H1 (cell line): ENCODE measurements at regions of chr3 and their contacts with region 1.

Region 1: DNA sequence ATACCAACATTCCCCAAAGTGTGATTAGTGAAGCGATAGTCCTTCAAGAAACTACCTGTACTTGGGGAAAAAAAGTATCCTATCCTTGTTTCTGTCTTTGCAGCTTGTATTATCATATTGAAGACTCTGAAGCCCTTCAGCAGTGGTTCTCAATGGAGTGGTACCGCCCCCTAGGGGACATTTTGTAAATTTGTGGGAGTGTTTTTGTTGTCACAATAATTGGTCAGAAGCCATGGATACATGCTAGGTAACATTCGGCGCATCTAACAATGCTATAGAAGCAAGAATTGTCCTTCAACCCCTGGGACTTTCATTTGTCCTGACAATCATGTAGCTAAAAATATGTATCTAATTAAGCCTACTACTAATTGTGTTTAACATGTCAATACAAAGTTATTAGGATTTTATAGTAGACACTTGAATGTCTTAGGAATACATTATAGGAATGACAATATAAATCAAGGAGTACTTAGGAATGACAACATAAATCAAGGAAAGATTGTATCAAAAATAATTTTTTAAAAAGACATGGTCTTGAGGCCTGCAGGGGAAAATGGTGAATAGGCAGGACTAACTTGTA is 53.7 kb downstream of the NMD3 start:
- DNase-seq: peak; percentile 13 to 57
- H3K4me3 ChIP-seq: no peak overlapping the region
- H3K27ac ChIP-seq: no peak overlapping the region
- H3K4me1 ChIP-seq: no peaks in the 10 kb centered on the region; a peak in 1 of 7 replicates
- H3K27me3 ChIP-seq: no peaks in the 10 kb centered on the region
- CTCF ChIP-seq: peak in 2 of 3 experiments; percentile 57 to 58; a peak in 2 of 4 replicates
- EP300 ChIP-seq: no peak
- POLR2A ChIP-seq: no peak
- RAD21 ChIP-seq: peak; percentile 59 to 68

Region 2: GRCh38 chr3:161284989-161285388 is 10.2 kb after region 1 on chr3:
- CTCF ChIA-PET with region 1: interaction called, 42 read pairs
- POLR2A ChIA-PET with region 1: no interaction called
- DNase-seq: no peak
- H3K4me3 ChIP-seq: no peak overlapping the region
- H3K27ac ChIP-seq: no peak overlapping the region
- H3K4me1 ChIP-seq: no peaks in the 10 kb centered on the region
- H3K27me3 ChIP-seq: no peaks in the 10 kb centered on the region
- CTCF ChIP-seq: no peak
- EP300 ChIP-seq: no peak
- POLR2A ChIP-seq: no peak
- RAD21 ChIP-seq: no peak

Region 3: GRCh38 chr3:161305095-161305991 is 30.5 kb after region 1 on chr3:
- CTCF ChIA-PET with region 1: interaction called, 13 read pairs
- POLR2A ChIA-PET with region 1: no interaction called
- DNase-seq: no peak
- H3K4me3 ChIP-seq: no peak overlapping the region
- H3K27ac ChIP-seq: no peak overlapping the region
- H3K4me1 ChIP-seq: no peaks in the 10 kb centered on the region
- H3K27me3 ChIP-seq: no peaks in the 10 kb centered on the region
- CTCF ChIP-seq: peak in 2 of 3 experiments; percentile 20 to 56; a peak in 2 of 4 replicates
- EP300 ChIP-seq: no peak
- POLR2A ChIP-seq: no peak
- RAD21 ChIP-seq: peak; percentile 36 to 46

Region 4: GRCh38 chr3:161409069-161409468 is 134.3 kb after region 1 on chr3:
- CTCF ChIA-PET with region 1: interaction called, 41 read pairs
- POLR2A ChIA-PET with region 1: no interaction called
- DNase-seq: no peak
- H3K4me3 ChIP-seq: no peak overlapping the region
- H3K27ac ChIP-seq: no peak overlapping the region
- H3K4me1 ChIP-seq: peaks cover 0 to 4% (median 0%) of the 10 kb centered on the region in 4 experiments; a peak in 1 of 7 replicates
- H3K27me3 ChIP-seq: no peaks in the 10 kb centered on the region
- CTCF ChIP-seq: peak in 2 of 3 experiments; percentile 58 to 64; a peak in 3 of 4 replicates
- EP300 ChIP-seq: no peak
- POLR2A ChIP-seq: no peak
- RAD21 ChIP-seq: peak; percentile 80 to 82

Region 5: DNA sequence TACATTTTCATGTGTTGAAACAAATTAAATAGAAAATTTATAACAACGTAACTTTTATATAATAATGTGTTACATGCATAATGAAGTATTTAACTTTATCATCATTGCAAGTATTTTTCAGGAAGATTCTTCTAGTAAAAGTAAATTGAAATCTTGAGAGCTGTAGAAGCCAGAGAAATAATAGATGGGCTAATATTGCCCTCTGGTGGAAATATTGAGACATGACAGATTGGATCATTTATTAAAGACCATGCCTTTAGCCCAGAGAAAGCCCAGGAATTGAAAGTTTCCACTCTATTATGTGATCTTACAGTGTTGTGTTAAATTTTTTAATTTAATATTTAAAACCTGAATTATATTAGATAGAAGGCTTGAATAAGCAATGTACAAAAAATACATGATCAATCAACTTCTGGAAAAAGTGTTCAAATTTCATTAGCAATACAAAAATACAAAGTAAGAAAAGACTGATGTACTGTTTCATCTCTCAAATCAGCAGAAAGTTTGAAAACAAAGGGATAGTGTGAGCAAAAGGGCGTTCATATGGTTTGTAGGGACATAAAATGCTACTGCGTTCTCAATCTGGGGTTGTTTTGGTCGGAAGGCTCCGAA is 149.2 kb after region 1 on chr3:
- CTCF ChIA-PET with region 1: interaction called, 61 read pairs
- POLR2A ChIA-PET with region 1: no interaction called
- DNase-seq: no peak
- H3K4me3 ChIP-seq: no peak overlapping the region
- H3K27ac ChIP-seq: no peak overlapping the region
- H3K4me1 ChIP-seq: peaks cover 3 to 17% (median 13%) of the 10 kb centered on the region in 4 experiments; a peak in 6 of 7 replicates
- H3K27me3 ChIP-seq: no peaks in the 10 kb centered on the region
- CTCF ChIP-seq: peak in 2 of 3 experiments; percentile 23 to 42; a peak in 2 of 4 replicates
- EP300 ChIP-seq: no peak
- POLR2A ChIP-seq: no peak
- RAD21 ChIP-seq: peak; percentile 80 to 86